HepG2 (cell line): ENCODE measurements at regions of chr15 and their contacts with region 1.

Region 1: GRCh38 chr15:78314181-78314581 is 14.8 kb upstream of the SKIC8 start:
- DNase-seq: no peak
- ATAC-seq: no peak
- H3K4me3 ChIP-seq: no peak overlapping the region
- H3K27ac ChIP-seq: no peak overlapping the region
- H3K4me1 ChIP-seq: no peaks in the 10 kb centered on the region
- H3K27me3 ChIP-seq: peaks cover 2 to 39% of the 10 kb centered on the region in 2 experiments; a peak in 4 of 5 replicates
- CTCF ChIP-seq: no peak
- EP300 ChIP-seq: no peak
- POLR2A ChIP-seq: no peak
- RAD21 ChIP-seq: no peak

Region 2: DNA sequence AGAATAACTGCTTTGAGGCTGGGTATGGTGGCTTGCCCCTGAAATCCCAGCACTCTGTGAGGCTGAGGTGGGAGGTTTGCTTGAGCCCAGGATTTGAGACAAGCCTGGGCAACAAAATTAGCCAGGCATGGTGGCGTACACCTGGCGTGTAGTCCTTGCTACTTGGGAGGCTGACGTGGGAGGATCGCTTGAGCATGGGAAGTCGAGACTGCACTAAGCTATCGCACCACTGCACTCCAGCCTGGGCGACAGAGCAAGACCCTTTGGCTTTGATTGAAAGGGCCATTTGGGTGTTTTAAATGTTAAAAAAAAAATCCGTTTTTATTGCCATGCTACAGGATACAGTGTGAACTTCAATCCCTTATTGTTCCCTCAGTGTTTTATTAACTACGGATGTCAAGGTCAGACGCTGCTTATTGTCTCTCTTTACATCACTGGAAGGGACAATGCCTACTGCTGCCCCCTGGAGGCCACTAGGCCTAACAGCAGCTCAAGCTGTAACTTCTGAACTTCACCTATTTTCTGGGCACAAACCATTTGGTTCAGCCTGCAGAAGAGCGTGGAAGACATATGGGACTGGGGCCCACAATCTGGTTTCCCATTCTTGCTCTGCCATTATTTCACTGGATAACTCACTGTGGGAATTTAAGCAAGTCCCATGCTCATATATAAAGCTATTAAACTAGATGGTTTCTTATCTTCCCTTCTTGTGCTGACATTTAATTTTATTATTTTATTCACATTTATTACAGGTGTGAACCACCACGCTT is 108.6 kb after region 1 on chr15:
- CTCF ChIA-PET with region 1: interaction called, 47 read pairs
- POLR2A ChIA-PET with region 1: no interaction called
- in situ Hi-C with region 1: loop called (anchors 5 kb)
- intact Hi-C with region 1: no loop called
- DNase-seq: peak; percentile 70
- ATAC-seq: peak; percentile 68
- H3K4me3 ChIP-seq: peak overlapping the region in 1 of 3 experiments; percentile 7; a peak in 2 of 6 replicates
- H3K27ac ChIP-seq: no peak overlapping the region
- H3K4me1 ChIP-seq: peaks cover 49% of the 10 kb centered on the region
- H3K27me3 ChIP-seq: no peaks in the 10 kb centered on the region; a peak in 1 of 5 replicates
- CTCF ChIP-seq: peak; percentile 87
- EP300 ChIP-seq: no peak
- POLR2A ChIP-seq: no peak
- RAD21 ChIP-seq: peak; percentile 62

Region 3: GRCh38 chr15:79896637-79897379 is 1582.6 kb after region 1 on chr15 and contains the start of gene MTHFS:
- CTCF ChIA-PET with region 1: no interaction called
- POLR2A ChIA-PET with region 1: no interaction called
- in situ Hi-C with region 1: no loop called
- intact Hi-C with region 1: no loop called
- DNase-seq: peak; percentile 66
- ATAC-seq: peak; percentile 96
- H3K4me3 ChIP-seq: peak within 1 kb of the TSS; percentile 85 to 88 (median 85)
- H3K27ac ChIP-seq: peak within 1 kb of the TSS; percentile 98
- H3K4me1 ChIP-seq: peaks cover 62% of the 10 kb centered on the region
- H3K27me3 ChIP-seq: no peaks in the 10 kb centered on the region; a peak in 1 of 5 replicates
- CTCF ChIP-seq: peak; percentile 77
- EP300 ChIP-seq: peak in 1 of 2 experiments; percentile 48; a peak in 1 of 4 replicates
- POLR2A ChIP-seq: peak; percentile 96 to 97
- RAD21 ChIP-seq: peak; percentile 80
- total RNA-seq, gene MTHFS: 37.0 and 52.4 TPM in 2 replicates